ENCODE measurements at regions of chr7 and their contacts with region 1.

Region 1: DNA sequence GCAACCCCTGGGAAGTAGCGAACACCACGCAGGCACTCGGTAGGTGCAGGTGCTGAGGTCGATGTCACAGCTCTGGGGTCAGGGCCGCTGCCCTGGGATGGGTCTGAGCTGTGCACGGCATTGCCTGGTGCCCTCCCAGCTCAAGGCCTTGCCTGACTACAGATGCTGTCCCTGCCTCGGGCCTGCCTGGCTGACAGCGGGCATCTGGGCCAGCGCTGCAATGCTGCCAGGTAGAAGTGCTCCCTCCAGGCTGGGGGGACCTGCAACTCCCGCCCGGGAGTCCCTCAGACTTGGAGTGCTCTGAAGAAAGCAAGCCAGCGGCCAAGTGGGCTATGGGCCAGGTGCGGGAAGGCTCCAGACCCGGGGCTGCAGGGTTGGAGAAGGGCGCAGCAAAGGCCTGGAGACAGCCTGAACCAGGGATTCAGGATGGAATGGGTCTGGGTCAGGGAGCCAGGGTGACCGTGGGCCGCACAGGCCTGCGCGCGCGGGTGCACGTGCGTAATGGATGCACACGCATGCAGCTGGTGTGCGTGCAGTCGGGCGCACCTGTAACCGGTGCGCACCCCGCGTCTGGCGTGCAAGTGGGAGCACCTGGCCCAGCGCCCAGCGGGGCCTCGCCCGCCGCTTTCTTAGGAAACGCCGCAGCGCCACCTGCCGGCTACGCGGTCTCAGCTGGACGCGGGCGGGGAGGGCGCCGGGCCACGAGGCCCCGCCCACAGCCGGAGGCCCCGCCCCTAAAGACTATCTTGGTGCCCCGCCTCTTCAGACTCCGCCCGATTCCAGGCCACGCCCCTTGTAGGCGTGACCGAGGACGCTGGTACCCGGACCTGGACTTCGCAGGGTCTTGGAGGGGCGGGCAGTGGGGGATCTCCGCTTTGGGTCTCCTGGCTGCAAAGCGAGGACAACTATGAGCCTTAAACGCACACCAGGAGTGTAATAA is 46.7 kb downstream of the MICALL2 start:
- DNase-seq: peak; percentile 33
- ATAC-seq: peak; percentile 92
- H3K4me3 ChIP-seq: peak overlapping the region; percentile 14 to 44; a peak in 3 of 4 replicates
- H3K27ac ChIP-seq: no peak overlapping the region
- H3K4me1 ChIP-seq: no peaks in the 10 kb centered on the region
- H3K27me3 ChIP-seq: no peaks in the 10 kb centered on the region
- CTCF ChIP-seq: peak; percentile 97

Region 2: GRCh38 chr7:1193593-1194424 is 218.8 kb before region 1 on chr7:
- CTCF ChIA-PET with region 1: interaction called, 4 read pairs
- POLR2A ChIA-PET with region 1: no interaction called
- in situ Hi-C with region 1: no loop called
- intact Hi-C with region 1: loop called (anchors 5 kb)
- DNase-seq: no peak
- ATAC-seq: peak; percentile 97
- H3K4me3 ChIP-seq: no peak overlapping the region
- H3K27ac ChIP-seq: no peak overlapping the region
- H3K4me1 ChIP-seq: peaks cover 4% of the 10 kb centered on the region; the same call in 1 of the 2 replicates
- H3K27me3 ChIP-seq: no peaks in the 10 kb centered on the region
- CTCF ChIP-seq: peak; percentile 92

Region 3: GRCh38 chr7:1225441-1226185 is 187.0 kb before region 1 on chr7:
- CTCF ChIA-PET with region 1: interaction called, 3 read pairs
- POLR2A ChIA-PET with region 1: no interaction called
- in situ Hi-C with region 1: no loop called
- intact Hi-C with region 1: loop called (anchors 2 kb)
- DNase-seq: no peak
- ATAC-seq: peak; percentile 74
- H3K4me3 ChIP-seq: no peak overlapping the region
- H3K27ac ChIP-seq: no peak overlapping the region
- H3K4me1 ChIP-seq: no peaks in the 10 kb centered on the region; the same call in 1 of the 2 replicates
- H3K27me3 ChIP-seq: no peaks in the 10 kb centered on the region
- CTCF ChIP-seq: peak; percentile 100

Region 4: GRCh38 chr7:1401011-1401410 is 11.6 kb before region 1 on chr7:
- CTCF ChIA-PET with region 1: interaction called, 11 read pairs
- POLR2A ChIA-PET with region 1: no interaction called
- in situ Hi-C with region 1: no loop called
- intact Hi-C with region 1: no loop called
- DNase-seq: no peak
- ATAC-seq: no peak
- H3K4me3 ChIP-seq: no peak overlapping the region
- H3K27ac ChIP-seq: no peak overlapping the region
- H3K4me1 ChIP-seq: peaks cover 12% of the 10 kb centered on the region
- H3K27me3 ChIP-seq: peaks cover 8% of the 10 kb centered on the region
- CTCF ChIP-seq: no peak

Region 5: GRCh38 chr7:1512781-1513656 is 100.4 kb after region 1 on chr7:
- CTCF ChIA-PET with region 1: interaction called, 19 read pairs
- POLR2A ChIA-PET with region 1: no interaction called
- in situ Hi-C with region 1: no loop called
- intact Hi-C with region 1: no loop called
- DNase-seq: no peak
- ATAC-seq: peak; percentile 79
- H3K4me3 ChIP-seq: peak overlapping the region in 1 of 2 experiments; percentile 13; a peak in 1 of 4 replicates
- H3K27ac ChIP-seq: peak overlapping the region; percentile 85
- H3K4me1 ChIP-seq: peaks cover 52% of the 10 kb centered on the region
- H3K27me3 ChIP-seq: no peaks in the 10 kb centered on the region
- CTCF ChIP-seq: no peak

Measured in Panc1 (cell line).